Heart left ventricle (tissue), 16 donors: ENCODE measurements at regions of chr9 and their contacts with region 1.

Region 1: DNA sequence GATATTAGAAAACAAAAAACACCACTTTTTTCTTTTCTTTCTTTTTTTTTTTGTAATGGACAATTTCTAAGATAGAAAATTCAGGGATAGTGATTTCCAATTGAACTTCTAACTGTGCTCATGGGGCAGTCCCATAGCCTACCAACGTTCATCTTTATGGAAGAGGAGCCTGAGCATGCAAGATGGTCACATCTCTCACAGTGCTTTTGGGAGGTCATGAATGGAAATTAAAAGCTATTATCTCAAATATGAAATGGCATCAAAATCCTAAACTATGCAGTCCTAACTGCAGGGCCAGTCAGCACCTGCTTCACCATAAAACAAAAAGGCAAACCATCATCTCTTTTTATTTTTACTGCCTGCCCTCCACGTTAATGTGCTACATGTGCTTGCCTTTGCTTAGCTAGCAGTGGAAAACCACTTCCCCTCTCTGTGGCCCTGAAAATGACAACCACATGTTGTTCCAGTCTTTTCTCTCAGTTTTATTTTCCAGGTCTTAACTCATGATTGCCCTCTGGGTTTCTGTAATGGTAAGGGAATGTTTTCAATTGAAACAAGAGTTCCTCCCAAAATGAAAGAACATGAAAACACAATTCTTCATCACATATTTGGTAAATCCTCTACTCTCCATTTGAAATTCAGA is 16.7 kb downstream of the IFNB1 start:
- DNase-seq: no peak
- ATAC-seq: no peak
- H3K4me3 ChIP-seq: no peak overlapping the region
- H3K27ac ChIP-seq: no peak overlapping the region
- H3K4me1 ChIP-seq: no peaks in the 10 kb centered on the region
- H3K27me3 ChIP-seq: no peaks in the 10 kb centered on the region
- CTCF ChIP-seq: no peak
- POLR2A ChIP-seq: no peak

Region 2: GRCh38 chr9:20972684-20973083 is 88.4 kb before region 1 on chr9:
- intact Hi-C with region 1: loop called in 1 of 10 experiments (anchors 10 kb)
- DNase-seq: no peak
- ATAC-seq: no peak
- H3K4me3 ChIP-seq: no peak overlapping the region
- H3K27ac ChIP-seq: no peak overlapping the region
- H3K4me1 ChIP-seq: no peaks in the 10 kb centered on the region
- H3K27me3 ChIP-seq: no peaks in the 10 kb centered on the region
- CTCF ChIP-seq: no peak
- POLR2A ChIP-seq: no peak

Region 3: GRCh38 chr9:20997503-20998076 is 63.5 kb before region 1 on chr9:
- intact Hi-C with region 1: loop called in 1 of 10 experiments (anchors 10 kb)
- DNase-seq: no peak
- ATAC-seq: no peak
- H3K4me3 ChIP-seq: no peak overlapping the region
- H3K27ac ChIP-seq: peak overlapping the region in 1 of 12 donors; percentile 3
- H3K4me1 ChIP-seq: no peaks in the 10 kb centered on the region
- H3K27me3 ChIP-seq: no peaks in the 10 kb centered on the region
- CTCF ChIP-seq: no peak
- POLR2A ChIP-seq: no peak